Activated CD8-positive, alpha-beta T cell treated with anti-CD3 and anti-CD28 coated beads for 36 hours (primary cell): ENCODE measurements at regions of chr12 and their contacts with region 1.

Region 1: DNA sequence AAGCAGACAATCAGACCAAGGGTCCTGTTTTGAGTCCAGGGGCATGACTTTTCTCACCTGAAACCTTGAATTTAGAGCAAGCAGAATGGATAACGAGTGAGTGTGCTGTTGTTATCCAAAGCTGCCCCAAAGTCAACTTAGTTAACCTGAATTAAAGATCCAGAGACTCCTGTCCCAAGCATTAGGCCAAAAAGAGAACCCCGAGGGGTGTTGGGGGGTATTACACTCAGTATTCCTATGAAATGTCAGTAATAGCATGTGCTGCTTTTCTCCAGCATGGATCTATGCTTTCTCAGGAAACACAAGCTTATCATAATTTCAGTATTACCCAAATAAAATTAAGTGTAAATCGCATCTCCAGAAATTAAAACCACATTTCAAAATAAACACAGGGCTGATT is 19.0 kb downstream of the EIF4B start:
- DNase-seq: no peak
- ATAC-seq: no peak
- H3K4me3 Mint-ChIP-seq: no peak overlapping the region
- H3K27ac Mint-ChIP-seq: peak overlapping the region; percentile 57
- H3K4me1 Mint-ChIP-seq: no peaks in the 10 kb centered on the region
- H3K27me3 Mint-ChIP-seq: no peaks in the 10 kb centered on the region
- CTCF ChIP-seq: no peak

Region 2: GRCh38 chr12:53005986-53006809 is 19.1 kb before region 1 on chr12 and contains the start of gene EIF4B:
- CTCF ChIA-PET with region 1: interaction called, 5 read pairs
- POLR2A ChIA-PET with region 1: interaction called, 15 read pairs
- intact Hi-C with region 1: no loop called
- DNase-seq: peak; percentile 100
- ATAC-seq: peak; percentile 94
- H3K4me3 Mint-ChIP-seq: peak within 1 kb of the TSS; percentile 86
- H3K27ac Mint-ChIP-seq: peak within 1 kb of the TSS; percentile 99
- H3K4me1 Mint-ChIP-seq: peaks cover 29% of the 10 kb centered on the region
- H3K27me3 Mint-ChIP-seq: no peaks in the 10 kb centered on the region
- CTCF ChIP-seq: no peak
- total RNA-seq, gene EIF4B: 789 to 814 TPM

Region 3: DNA sequence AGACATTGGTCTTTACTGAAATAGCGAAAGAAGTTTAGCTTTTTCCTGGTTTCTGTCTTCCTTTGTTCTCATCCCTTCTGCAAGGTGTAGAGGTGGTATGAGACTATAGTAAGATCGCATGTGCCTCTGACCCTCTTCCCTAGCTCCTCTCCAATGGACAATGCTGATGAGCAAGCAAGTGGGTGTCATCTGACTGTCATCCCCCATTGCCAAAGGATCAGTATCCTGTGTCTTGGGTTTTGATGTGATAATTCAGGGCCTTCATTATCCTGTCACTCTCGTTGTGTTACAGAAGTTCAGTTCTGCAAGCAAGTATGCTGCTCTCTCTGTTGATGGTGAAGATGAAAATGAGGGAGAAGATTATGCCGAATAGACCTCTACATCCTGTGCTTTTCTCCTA is 14.6 kb after region 1 on chr12:
- CTCF ChIA-PET with region 1: interaction called, 40 read pairs
- POLR2A ChIA-PET with region 1: interaction called, 65 read pairs
- intact Hi-C with region 1: no loop called
- DNase-seq: no peak
- ATAC-seq: no peak
- H3K4me3 Mint-ChIP-seq: no peak overlapping the region
- H3K27ac Mint-ChIP-seq: peak overlapping the region; percentile 40
- H3K4me1 Mint-ChIP-seq: peaks cover 19% of the 10 kb centered on the region
- H3K27me3 Mint-ChIP-seq: no peaks in the 10 kb centered on the region
- CTCF ChIP-seq: no peak

Region 4: GRCh38 chr12:53047221-53048042 is 22.2 kb after region 1 on chr12:
- CTCF ChIA-PET with region 1: interaction called, 4 read pairs
- POLR2A ChIA-PET with region 1: interaction called, 29 read pairs
- intact Hi-C with region 1: no loop called
- DNase-seq: peak; percentile 64
- ATAC-seq: peak; percentile 80
- H3K4me3 Mint-ChIP-seq: peak overlapping the region; percentile 85
- H3K27ac Mint-ChIP-seq: peak overlapping the region; percentile 27
- H3K4me1 Mint-ChIP-seq: peaks cover 27% of the 10 kb centered on the region
- H3K27me3 Mint-ChIP-seq: no peaks in the 10 kb centered on the region
- CTCF ChIP-seq: peak; percentile 54

Region 5: DNA sequence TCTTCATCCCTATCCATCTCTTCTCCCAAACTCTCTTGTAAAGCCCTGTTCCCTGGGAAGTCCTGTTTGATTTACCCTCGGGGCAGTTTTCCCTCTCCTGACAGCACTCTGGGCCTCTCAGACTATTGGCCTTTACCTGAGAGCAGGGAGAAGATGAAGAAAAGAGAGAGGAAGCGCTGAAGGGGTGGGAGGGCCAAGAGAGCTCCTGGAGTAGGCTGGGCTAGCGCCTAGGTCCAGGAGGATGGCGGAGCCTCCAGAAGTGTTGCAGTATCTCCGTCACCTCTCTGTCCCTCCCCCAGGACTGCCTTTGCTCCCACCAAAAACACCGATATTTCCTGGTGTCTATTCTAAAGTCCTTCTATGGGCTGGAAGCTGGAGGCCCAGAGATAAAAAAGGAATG is 66.5 kb after region 1 on chr12:
- CTCF ChIA-PET with region 1: no interaction called
- POLR2A ChIA-PET with region 1: no interaction called
- intact Hi-C with region 1: no loop called
- DNase-seq: no peak
- ATAC-seq: no peak
- H3K4me3 Mint-ChIP-seq: no peak overlapping the region
- H3K27ac Mint-ChIP-seq: no peak overlapping the region
- H3K4me1 Mint-ChIP-seq: peaks cover 7% of the 10 kb centered on the region
- H3K27me3 Mint-ChIP-seq: no peaks in the 10 kb centered on the region
- CTCF ChIP-seq: no peak